ENCODE measurements at regions of chr10 and their contacts with region 1.

Region 1: DNA sequence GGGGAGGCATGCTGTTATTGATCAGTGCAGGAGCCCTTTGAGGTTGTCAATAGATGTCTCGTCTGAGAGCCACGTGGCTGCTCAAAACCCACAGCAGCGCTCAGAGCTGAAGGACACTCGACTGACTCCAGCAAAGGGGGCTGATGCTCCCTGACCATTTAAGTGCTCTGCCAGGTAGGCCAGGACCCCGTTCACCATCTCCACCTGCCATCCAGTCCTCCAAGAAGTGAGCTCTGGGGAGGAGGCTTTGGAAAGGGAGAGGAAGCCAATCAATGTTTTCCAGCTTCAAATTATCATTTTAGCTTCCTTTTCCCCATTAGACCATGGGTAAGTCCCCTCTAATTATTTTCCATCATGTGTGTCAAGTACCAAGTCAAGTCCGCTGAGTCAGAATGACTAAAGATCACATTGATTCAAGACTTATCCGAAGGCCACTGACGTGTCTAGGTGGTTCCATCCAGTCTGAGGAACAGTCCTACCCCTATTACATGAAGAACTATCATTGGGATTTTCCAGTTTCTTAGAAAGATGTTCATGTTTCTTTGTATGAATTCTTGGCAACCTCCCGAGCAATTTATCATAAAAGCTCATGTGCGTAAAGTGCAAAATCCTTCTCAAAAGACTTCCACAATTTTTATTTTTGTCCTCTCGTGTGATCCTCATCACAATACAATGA is 302.6 kb upstream of the LYZL1 start:
- DNase-seq: no peak
- ATAC-seq: no peak
- H3K4me3 ChIP-seq: no peak overlapping the region
- H3K27ac ChIP-seq: no peak overlapping the region
- H3K4me1 ChIP-seq: peaks cover 0 to 4% (median 3%) of the 10 kb centered on the region in 3 donors
- H3K27me3 ChIP-seq: no peaks in the 10 kb centered on the region
- CTCF ChIP-seq: no peak

Region 2: DNA sequence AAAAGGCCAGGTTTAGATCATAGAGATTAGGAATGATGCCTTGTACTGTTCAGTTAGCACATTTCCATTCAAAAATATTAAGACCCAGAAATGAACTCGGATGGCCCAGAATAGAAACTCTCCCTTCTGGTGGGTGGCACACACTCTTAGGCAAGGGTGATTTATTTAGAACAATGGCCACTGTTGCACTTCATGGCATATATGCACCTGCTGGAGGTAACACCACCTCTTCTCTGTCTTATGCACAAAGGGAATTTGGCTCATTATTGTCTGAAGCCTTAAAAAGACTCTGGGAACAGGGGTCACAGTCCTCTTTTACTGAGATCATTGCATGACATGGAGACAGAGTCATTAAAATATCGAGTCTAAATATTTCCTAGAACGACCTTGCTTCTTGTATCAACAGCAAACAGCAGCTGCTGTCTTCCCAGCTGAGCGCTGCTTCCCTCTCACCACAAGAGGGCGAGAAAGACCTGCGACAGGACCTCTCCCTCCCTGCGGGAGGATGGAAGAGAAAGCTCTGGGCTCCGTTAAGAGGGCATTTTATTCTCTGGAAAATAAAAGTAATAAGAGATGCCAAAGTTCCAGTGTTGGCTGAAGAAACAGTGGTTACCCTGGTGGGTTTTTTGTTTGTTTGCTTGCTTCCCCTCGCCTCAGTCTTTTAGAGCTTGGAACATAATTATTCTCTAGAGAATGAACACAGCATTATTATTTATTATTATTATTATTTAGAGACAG is 322.5 kb before region 1 on chr10:
- intact Hi-C with region 1: loop called in 1 of 3 experiments (anchors 5 kb)
- DNase-seq: peak; percentile 80 to 92 (median 84)
- ATAC-seq: peak; percentile 97 to 99 (median 98)
- H3K4me3 ChIP-seq: no peak overlapping the region
- H3K27ac ChIP-seq: no peak overlapping the region
- H3K4me1 ChIP-seq: peaks cover 0 to 4% (median 0%) of the 10 kb centered on the region in 3 donors
- H3K27me3 ChIP-seq: peaks cover 0 to 6% (median 3%) of the 10 kb centered on the region in 4 donors
- CTCF ChIP-seq: peak; percentile 81 to 97 (median 92)

Region 3: DNA sequence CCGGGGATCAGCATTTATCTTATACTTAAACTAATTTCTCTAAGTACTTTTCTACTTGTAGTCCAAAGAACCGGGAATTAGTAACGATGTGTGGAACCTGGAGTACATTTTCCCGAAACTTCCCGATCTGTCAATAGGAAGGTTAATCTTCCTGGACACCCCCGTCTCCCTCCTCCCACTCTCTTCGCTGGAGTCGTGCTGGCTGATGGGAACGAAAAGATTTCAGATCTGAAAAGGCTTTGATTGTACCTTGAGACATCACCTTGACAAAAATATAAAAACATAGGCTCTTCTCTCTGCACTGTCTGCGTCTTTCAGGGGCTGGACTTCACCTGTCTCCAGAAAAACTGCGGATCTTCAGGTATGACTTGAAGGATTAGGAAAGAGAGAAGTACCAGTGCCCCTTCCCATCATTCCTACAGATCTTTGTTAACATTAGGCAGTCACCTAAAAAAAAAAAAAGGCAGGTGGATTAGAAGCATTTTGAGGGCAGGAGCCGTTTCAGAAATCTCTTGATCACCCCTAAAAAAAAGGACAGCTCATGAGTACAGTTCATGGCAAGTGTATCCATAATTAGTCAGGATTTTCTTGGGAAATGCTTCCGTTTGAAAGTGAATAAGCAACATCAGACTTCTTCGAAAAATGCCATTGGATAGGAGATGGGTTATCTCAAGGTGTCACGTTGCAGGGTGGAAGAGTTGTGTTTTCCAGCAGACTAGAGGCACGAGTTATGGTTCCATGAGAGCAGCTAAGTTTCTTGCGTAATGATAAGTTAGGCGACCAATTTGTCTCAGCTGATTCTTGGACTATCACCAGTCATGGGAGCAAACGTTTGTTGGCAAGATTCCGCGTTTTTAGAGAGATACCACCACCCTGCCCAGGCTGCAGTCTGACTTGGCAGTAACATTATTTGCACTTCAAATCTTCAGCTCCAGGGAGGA is 316.8 kb before region 1 on chr10:
- intact Hi-C with region 1: loop called in 2 of 3 experiments (anchors 5 kb)
- DNase-seq: no peak
- ATAC-seq: peak in 1 of 4 donors; percentile 35
- H3K4me3 ChIP-seq: peak overlapping the region in 2 of 4 donors; percentile 24 to 34
- H3K27ac ChIP-seq: no peak overlapping the region
- H3K4me1 ChIP-seq: no peaks in the 10 kb centered on the region
- H3K27me3 ChIP-seq: peaks cover 0 to 17% (median 3%) of the 10 kb centered on the region in 4 donors
- CTCF ChIP-seq: no peak

Region 4: GRCh38 chr10:28722065-28722803 is 264.0 kb before region 1 on chr10:
- intact Hi-C with region 1: no loop called
- DNase-seq: peak in 4 of 6 donors; percentile 24 to 68 (median 42)
- ATAC-seq: peak; percentile 55 to 72 (median 71)
- H3K4me3 ChIP-seq: peak overlapping the region in 3 of 4 donors; percentile 21 to 39 (median 31)
- H3K27ac ChIP-seq: no peak overlapping the region
- H3K4me1 ChIP-seq: peaks cover 0 to 2% (median 0%) of the 10 kb centered on the region in 3 donors
- H3K27me3 ChIP-seq: peaks cover 0 to 4% (median 0%) of the 10 kb centered on the region in 4 donors
- CTCF ChIP-seq: no peak